Astrocyte of the cerebellum (primary cell): ENCODE measurements at regions of chr15 and their contacts with region 1.

Region 1: GRCh38 chr15:59689626-59690236 is 611 bp upstream of the BNIP2 start:
- DNase-seq: peak; percentile 19
- H3K4me3 ChIP-seq: peak overlapping the region; percentile 97
- CTCF ChIP-seq: no peak

Region 2: DNA sequence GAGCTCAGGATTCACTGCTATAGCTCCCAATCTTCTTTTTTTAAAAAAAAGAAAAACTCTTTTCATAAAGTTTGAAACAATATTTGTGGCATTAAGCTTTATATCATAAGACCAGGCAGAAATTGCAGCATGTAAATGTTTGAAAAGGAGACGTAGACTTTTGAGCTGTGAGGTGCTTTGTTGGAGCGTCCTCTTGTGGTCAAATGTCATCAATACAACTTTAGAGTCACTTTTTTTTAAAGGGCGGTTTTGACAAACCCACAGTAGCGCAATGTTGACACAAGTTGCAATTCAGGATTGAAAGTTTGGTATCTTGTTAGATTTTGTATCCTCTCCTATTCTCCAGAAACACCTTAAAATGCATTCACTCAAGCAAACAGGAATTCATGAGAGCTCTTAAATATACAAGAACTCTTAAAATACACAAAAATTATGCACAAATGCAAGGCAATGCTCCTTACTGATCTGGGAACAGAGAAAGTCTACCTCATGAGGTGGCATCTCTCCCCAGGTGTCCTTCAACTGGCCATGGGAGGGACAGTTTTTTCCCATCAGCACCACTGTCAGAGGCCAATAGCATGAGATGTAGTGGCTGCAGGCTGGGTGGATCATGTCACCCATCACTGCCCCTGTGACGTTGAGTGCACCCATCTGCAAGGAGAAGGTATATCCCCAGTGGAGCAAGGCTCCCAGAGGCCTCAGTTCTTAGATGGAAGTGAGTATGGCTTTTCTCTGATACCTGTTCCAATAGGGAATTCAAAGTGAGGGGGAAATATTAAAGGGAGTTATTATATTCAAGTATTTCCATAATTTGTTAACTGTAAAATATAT is 637.3 kb after region 1 on chr15:
- in situ Hi-C with region 1: loop called (anchors 10 kb)
- DNase-seq: peak; percentile 36
- H3K4me3 ChIP-seq: no peak overlapping the region
- CTCF ChIP-seq: peak; percentile 80

Region 3: GRCh38 chr15:60444289-60444912 is 754.7 kb after region 1 on chr15:
- in situ Hi-C with region 1: loop called (anchors 10 kb)
- DNase-seq: no peak
- H3K4me3 ChIP-seq: no peak overlapping the region
- CTCF ChIP-seq: peak; percentile 66